Thyroid gland (tissue), 4 donors: ENCODE measurements at regions of chr6 and their contacts with region 1.

Region 1: GRCh38 chr6:150004783-150005717 is 20.3 kb downstream of the RAET1L start:
- DNase-seq: peak; percentile 95 to 96
- H3K4me3 ChIP-seq: peak overlapping the region in 2 of 3 donors; percentile 23 to 39
- H3K27ac ChIP-seq: no peak overlapping the region
- H3K4me1 ChIP-seq: peaks cover 0 to 6% of the 10 kb centered on the region in 2 donors
- H3K27me3 ChIP-seq: no peaks in the 10 kb centered on the region
- CTCF ChIP-seq: no peak
- POLR2A ChIP-seq: no peak

Region 2: GRCh38 chr6:149840345-149841075 is 164.5 kb before region 1 on chr6:
- intact Hi-C with region 1: loop called (anchors 10 kb)
- DNase-seq: peak; percentile 66 to 71
- H3K4me3 ChIP-seq: no peak overlapping the region
- H3K27ac ChIP-seq: no peak overlapping the region
- H3K4me1 ChIP-seq: peaks cover 0 to 3% of the 10 kb centered on the region in 2 donors
- H3K27me3 ChIP-seq: no peaks in the 10 kb centered on the region
- CTCF ChIP-seq: peak in 4 of 6 experiments; percentile 46 to 67 (median 58)
- POLR2A ChIP-seq: no peak

Region 3: DNA sequence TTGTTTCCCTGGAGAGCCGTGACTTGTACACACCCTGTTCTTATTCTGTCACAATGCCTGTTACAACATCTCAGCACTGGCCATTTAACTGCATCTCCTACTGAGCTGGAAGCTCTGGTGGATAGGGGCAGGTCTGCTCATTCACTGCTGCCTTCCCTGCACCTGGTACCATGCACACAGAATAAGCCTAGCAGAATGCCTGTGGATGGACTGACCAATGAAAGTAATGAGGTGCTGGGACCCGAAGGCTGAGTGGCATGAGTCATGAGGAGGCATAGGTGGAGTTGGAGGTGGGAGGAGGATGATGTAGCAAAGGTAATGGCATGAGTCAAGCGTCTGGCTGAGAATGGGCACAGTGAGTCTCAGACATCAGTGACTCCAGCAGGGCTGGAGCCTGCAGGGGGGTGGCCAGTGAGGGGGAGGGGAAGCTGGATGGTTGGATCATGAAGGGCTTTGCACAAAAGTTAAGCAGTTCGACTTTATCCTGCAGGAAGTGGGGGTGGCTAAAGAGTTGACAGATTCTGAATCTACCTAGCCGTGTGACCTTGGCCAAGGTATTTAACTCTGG is 264.7 kb after region 1 on chr6:
- intact Hi-C with region 1: no loop called
- DNase-seq: no peak
- H3K4me3 ChIP-seq: no peak overlapping the region
- H3K27ac ChIP-seq: no peak overlapping the region
- H3K4me1 ChIP-seq: no peaks in the 10 kb centered on the region
- H3K27me3 ChIP-seq: no peaks in the 10 kb centered on the region
- CTCF ChIP-seq: no peak
- POLR2A ChIP-seq: no peak